Mammary epithelial cell (primary cell): ENCODE measurements at regions of chr12 and their contacts with region 1.

Region 1: GRCh38 chr12:71447691-71448132 is 8.1 kb downstream of the LGR5 start:
- DNase-seq: no peak
- H3K4me3 ChIP-seq: no peak overlapping the region
- H3K27ac ChIP-seq: no peak overlapping the region
- H3K4me1 ChIP-seq: no peaks in the 10 kb centered on the region
- H3K27me3 ChIP-seq: peaks cover 12% of the 10 kb centered on the region
- CTCF ChIP-seq: no peak

Region 2: DNA sequence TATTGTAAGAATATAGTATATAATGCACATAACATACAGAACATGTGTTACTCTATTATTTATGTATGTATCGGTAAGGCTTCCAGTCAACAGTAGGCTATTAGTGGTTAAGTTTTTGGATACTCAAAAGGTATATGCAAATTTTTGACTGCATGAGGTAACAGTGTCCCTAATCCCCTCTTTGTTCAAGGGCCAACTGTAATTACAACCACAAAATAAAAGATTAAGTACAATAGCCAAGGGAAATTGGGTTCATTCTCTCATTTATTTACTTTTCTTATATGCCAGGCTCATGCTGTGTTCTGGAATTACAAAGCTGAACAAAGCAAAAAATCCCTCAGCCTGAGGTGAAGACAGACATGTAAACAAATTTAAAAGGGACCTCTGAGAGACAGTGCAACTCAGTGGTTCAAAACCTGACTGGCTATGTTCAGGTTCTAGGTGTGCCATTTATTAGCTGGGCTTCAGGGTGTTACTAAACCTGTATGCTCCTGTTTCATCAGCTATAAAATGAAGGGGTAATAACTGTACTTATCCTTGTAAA is 246.5 kb before region 1 on chr12:
- CTCF ChIA-PET with region 1: no interaction called
- dilution Hi-C with region 1: no loop called
- in situ Hi-C with region 1: no loop called
- intact Hi-C with region 1: no loop called
- DNase-seq: no peak
- H3K4me3 ChIP-seq: no peak overlapping the region
- H3K27ac ChIP-seq: no peak overlapping the region
- H3K4me1 ChIP-seq: no peaks in the 10 kb centered on the region
- H3K27me3 ChIP-seq: peaks cover 4% of the 10 kb centered on the region
- CTCF ChIP-seq: no peak

Region 3: GRCh38 chr12:71533703-71534102 is 86.0 kb after region 1 on chr12:
- CTCF ChIA-PET with region 1: no interaction called
- dilution Hi-C with region 1: loop called (anchors 5 kb)
- in situ Hi-C with region 1: no loop called
- intact Hi-C with region 1: no loop called
- DNase-seq: no peak
- H3K4me3 ChIP-seq: no peak overlapping the region
- H3K27ac ChIP-seq: no peak overlapping the region
- H3K4me1 ChIP-seq: no peaks in the 10 kb centered on the region
- H3K27me3 ChIP-seq: no peaks in the 10 kb centered on the region
- CTCF ChIP-seq: no peak

Region 4: DNA sequence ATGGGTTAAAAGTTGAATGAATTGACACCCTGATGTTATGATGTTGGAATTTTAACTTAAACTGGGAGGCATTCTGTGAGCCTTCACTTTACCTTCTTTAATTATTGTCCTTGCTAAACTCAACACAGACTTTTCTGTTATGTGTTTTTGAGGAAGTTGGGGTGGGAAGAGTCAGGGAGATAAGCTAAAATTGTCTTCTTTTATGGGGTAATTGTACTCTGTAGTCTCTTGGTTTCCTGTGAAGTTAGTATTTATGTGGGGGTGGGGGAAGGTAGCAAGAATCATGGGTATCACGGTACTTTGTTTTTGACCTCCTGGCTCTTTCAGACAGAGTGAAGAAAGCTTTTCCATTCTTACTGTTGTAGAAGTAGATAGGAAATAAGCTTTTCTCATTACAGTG is 339.9 kb after region 1 on chr12:
- CTCF ChIA-PET with region 1: no interaction called
- dilution Hi-C with region 1: no loop called
- in situ Hi-C with region 1: no loop called
- intact Hi-C with region 1: no loop called
- DNase-seq: no peak
- H3K4me3 ChIP-seq: no peak overlapping the region
- H3K27ac ChIP-seq: no peak overlapping the region
- H3K4me1 ChIP-seq: no peaks in the 10 kb centered on the region
- H3K27me3 ChIP-seq: no peaks in the 10 kb centered on the region
- CTCF ChIP-seq: no peak